MCF 10A (cell line): ENCODE measurements at regions of chr12 and their contacts with region 1.

Region 1: GRCh38 chr12:133080368-133081158 is at the start of gene ZNF140:
- DNase-seq: peak; percentile 79
- H3K4me3 Mint-ChIP-seq: no peak within 1 kb of the TSS
- H3K27ac Mint-ChIP-seq: no peak within 1 kb of the TSS
- H3K4me1 Mint-ChIP-seq: no peaks in the 10 kb centered on the region
- H3K27me3 Mint-ChIP-seq: no peaks in the 10 kb centered on the region
- CTCF ChIP-seq: no peak
- total RNA-seq, gene ZNF140: 14.8 and 15.5 TPM in 2 replicates

Region 2: GRCh38 chr12:132828706-132829534 is 251.6 kb before region 1 on chr12 and contains the start of gene GOLGA3:
- CTCF ChIA-PET with region 1: no interaction called
- POLR2A ChIA-PET with region 1: no interaction called
- intact Hi-C with region 1: loop called (anchors 1 kb)
- DNase-seq: peak; percentile 91
- H3K4me3 Mint-ChIP-seq: peak within 1 kb of the TSS; percentile 94
- H3K27ac Mint-ChIP-seq: peak within 1 kb of the TSS; percentile 100
- H3K4me1 Mint-ChIP-seq: peaks cover 10% of the 10 kb centered on the region
- H3K27me3 Mint-ChIP-seq: no peaks in the 10 kb centered on the region
- CTCF ChIP-seq: no peak
- total RNA-seq, gene GOLGA3: 94.9 and 116 TPM in 2 replicates

Region 3: GRCh38 chr12:132887513-132888351 is 192.8 kb before region 1 on chr12 and contains the start of gene CHFR:
- CTCF ChIA-PET with region 1: no interaction called
- POLR2A ChIA-PET with region 1: interaction called, 3 read pairs
- intact Hi-C with region 1: loop called (anchors 1 kb)
- DNase-seq: peak; percentile 94
- H3K4me3 Mint-ChIP-seq: peak within 1 kb of the TSS; percentile 99
- H3K27ac Mint-ChIP-seq: peak within 1 kb of the TSS; percentile 100
- H3K4me1 Mint-ChIP-seq: no peaks in the 10 kb centered on the region
- H3K27me3 Mint-ChIP-seq: no peaks in the 10 kb centered on the region
- CTCF ChIP-seq: no peak
- total RNA-seq, gene CHFR: 41.0 and 42.4 TPM in 2 replicates

Region 4: GRCh38 chr12:132940071-132940719 is 140.4 kb before region 1 on chr12:
- CTCF ChIA-PET with region 1: no interaction called
- POLR2A ChIA-PET with region 1: no interaction called
- intact Hi-C with region 1: no loop called
- DNase-seq: no peak
- H3K4me3 Mint-ChIP-seq: no peak overlapping the region
- H3K27ac Mint-ChIP-seq: no peak overlapping the region
- H3K4me1 Mint-ChIP-seq: no peaks in the 10 kb centered on the region
- H3K27me3 Mint-ChIP-seq: no peaks in the 10 kb centered on the region
- CTCF ChIP-seq: no peak

Region 5: GRCh38 chr12:132950844-132951522 is 129.6 kb before region 1 on chr12:
- CTCF ChIA-PET with region 1: no interaction called
- POLR2A ChIA-PET with region 1: no interaction called
- intact Hi-C with region 1: no loop called
- DNase-seq: no peak
- H3K4me3 Mint-ChIP-seq: no peak overlapping the region
- H3K27ac Mint-ChIP-seq: no peak overlapping the region
- H3K4me1 Mint-ChIP-seq: peaks cover 10% of the 10 kb centered on the region
- H3K27me3 Mint-ChIP-seq: no peaks in the 10 kb centered on the region
- CTCF ChIP-seq: no peak

Region 6: GRCh38 chr12:132986001-132986912 is 94.3 kb before region 1 on chr12 and contains the start of gene ZNF26:
- CTCF ChIA-PET with region 1: interaction called, 3 read pairs
- POLR2A ChIA-PET with region 1: interaction called, 7 read pairs
- intact Hi-C with region 1: loop called (anchors 1 kb)
- DNase-seq: peak; percentile 91
- H3K4me3 Mint-ChIP-seq: peak within 1 kb of the TSS; percentile 87
- H3K27ac Mint-ChIP-seq: peak within 1 kb of the TSS; percentile 94
- H3K4me1 Mint-ChIP-seq: peaks cover 9% of the 10 kb centered on the region
- H3K27me3 Mint-ChIP-seq: no peaks in the 10 kb centered on the region
- CTCF ChIP-seq: no peak
- total RNA-seq, gene ZNF26: 18.5 and 18.7 TPM in 2 replicates

Region 7: GRCh38 chr12:133037207-133038005 is 43.2 kb before region 1 on chr12 and contains the start of gene ZNF84:
- CTCF ChIA-PET with region 1: no interaction called
- POLR2A ChIA-PET with region 1: interaction called, 6 read pairs
- intact Hi-C with region 1: loop called (anchors 2 kb)
- DNase-seq: peak; percentile 98
- H3K4me3 Mint-ChIP-seq: peak within 1 kb of the TSS; percentile 87
- H3K27ac Mint-ChIP-seq: peak within 1 kb of the TSS; percentile 93
- H3K4me1 Mint-ChIP-seq: no peaks in the 10 kb centered on the region
- H3K27me3 Mint-ChIP-seq: no peaks in the 10 kb centered on the region
- CTCF ChIP-seq: no peak
- total RNA-seq, gene ZNF84: 24.4 and 30.3 TPM in 2 replicates

Region 8: GRCh38 chr12:133130038-133130807 is 49.7 kb after region 1 on chr12 and contains the starts of genes ZNF10 and ZNF891:
- CTCF ChIA-PET with region 1: interaction called, 3 read pairs
- POLR2A ChIA-PET with region 1: interaction called, 23 read pairs
- intact Hi-C with region 1: loop called (anchors 1 kb)
- DNase-seq: peak; percentile 94
- H3K4me3 Mint-ChIP-seq: peak within 1 kb of the TSS; percentile 98
- H3K27ac Mint-ChIP-seq: peak within 1 kb of the TSS; percentile 98
- H3K4me1 Mint-ChIP-seq: peaks cover 6% of the 10 kb centered on the region
- H3K27me3 Mint-ChIP-seq: no peaks in the 10 kb centered on the region
- CTCF ChIP-seq: no peak
- total RNA-seq, gene ZNF10: 6.6 and 7.2 TPM in 2 replicates
- total RNA-seq, gene ZNF891: 1.6 and 1.9 TPM in 2 replicates

Region 9: GRCh38 chr12:133181238-133181959 is 100.8 kb after region 1 on chr12 and contains the start of gene ZNF268:
- CTCF ChIA-PET with region 1: interaction called, 3 read pairs
- POLR2A ChIA-PET with region 1: interaction called, 30 read pairs
- intact Hi-C with region 1: loop called (anchors 1 kb)
- DNase-seq: peak; percentile 92
- H3K4me3 Mint-ChIP-seq: peak within 1 kb of the TSS; percentile 90
- H3K27ac Mint-ChIP-seq: peak within 1 kb of the TSS; percentile 82
- H3K4me1 Mint-ChIP-seq: no peaks in the 10 kb centered on the region
- H3K27me3 Mint-ChIP-seq: no peaks in the 10 kb centered on the region
- CTCF ChIP-seq: peak; percentile 85
- total RNA-seq, gene ZNF268: 23.4 and 26.6 TPM in 2 replicates